ENCODE measurements at regions of chr9 and their contacts with region 1.

Region 1: GRCh38 chr9:14353222-14354056 is 39.5 kb upstream of the NFIB start:
- DNase-seq: peak; percentile 86 to 89
- ATAC-seq: peak; percentile 66 to 69
- H3K4me3 ChIP-seq: peak overlapping the region; percentile 15 to 40 (median 36)
- H3K27ac ChIP-seq: peak overlapping the region; percentile 84 to 90 (median 87)
- H3K4me1 ChIP-seq: peaks cover 19 to 24% of the 10 kb centered on the region in 2 donors
- H3K27me3 ChIP-seq: no peaks in the 10 kb centered on the region
- CTCF ChIP-seq: peak; percentile 87 to 95 (median 92)
- POLR2A ChIP-seq: no peak

Region 2: DNA sequence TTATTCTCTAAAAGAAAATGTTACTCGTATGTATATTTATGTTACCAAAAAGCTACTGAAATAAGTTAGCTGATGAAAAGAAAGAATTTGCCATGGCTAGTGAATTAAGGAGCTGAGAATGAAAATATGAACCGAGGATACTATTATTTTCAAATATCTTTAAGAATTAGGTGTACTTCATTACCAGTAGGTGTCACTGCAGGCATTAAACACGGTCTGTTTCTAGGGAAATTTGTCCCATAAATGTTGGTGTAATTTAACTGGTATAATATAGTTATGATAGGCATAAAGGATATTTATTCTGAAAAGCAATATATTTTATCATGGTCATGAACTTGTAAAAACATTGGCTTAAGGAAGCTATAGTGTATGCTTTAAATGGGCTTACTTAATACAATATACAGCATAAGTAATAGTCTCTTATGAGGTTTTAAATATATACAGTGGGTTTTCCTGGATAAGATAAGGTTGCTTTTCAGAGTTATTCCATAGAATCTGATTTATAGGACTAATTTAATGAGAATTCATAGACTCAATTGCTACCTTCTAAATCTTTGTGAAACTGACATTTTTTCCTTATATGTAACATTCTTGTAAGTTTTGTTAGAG is 1001.6 kb before region 1 on chr9:
- in situ Hi-C with region 1: loop called in 3 of 4 experiments (anchors 5 to 10 kb)
- intact Hi-C with region 1: loop called (anchors 1 kb)
- DNase-seq: no peak
- ATAC-seq: peak in 1 of 2 donors; percentile 41
- H3K4me3 ChIP-seq: no peak overlapping the region
- H3K27ac ChIP-seq: no peak overlapping the region
- H3K4me1 ChIP-seq: no peaks in the 10 kb centered on the region
- H3K27me3 ChIP-seq: no peaks in the 10 kb centered on the region
- CTCF ChIP-seq: peak; percentile 28 to 68 (median 52)
- POLR2A ChIP-seq: no peak

Region 3: GRCh38 chr9:13446938-13447842 is 906.2 kb before region 1 on chr9:
- in situ Hi-C with region 1: no loop called
- intact Hi-C with region 1: loop called (anchors 5 kb)
- DNase-seq: no peak
- ATAC-seq: no peak
- H3K4me3 ChIP-seq: peak overlapping the region in 3 of 4 donors; percentile 5 to 37 (median 19)
- H3K27ac ChIP-seq: peak overlapping the region; percentile 50 to 67 (median 62)
- H3K4me1 ChIP-seq: peaks cover 39 to 42% of the 10 kb centered on the region in 2 donors
- H3K27me3 ChIP-seq: no peaks in the 10 kb centered on the region
- CTCF ChIP-seq: peak in 2 of 5 experiments; percentile 23 to 46
- POLR2A ChIP-seq: no peak

Region 4: DNA sequence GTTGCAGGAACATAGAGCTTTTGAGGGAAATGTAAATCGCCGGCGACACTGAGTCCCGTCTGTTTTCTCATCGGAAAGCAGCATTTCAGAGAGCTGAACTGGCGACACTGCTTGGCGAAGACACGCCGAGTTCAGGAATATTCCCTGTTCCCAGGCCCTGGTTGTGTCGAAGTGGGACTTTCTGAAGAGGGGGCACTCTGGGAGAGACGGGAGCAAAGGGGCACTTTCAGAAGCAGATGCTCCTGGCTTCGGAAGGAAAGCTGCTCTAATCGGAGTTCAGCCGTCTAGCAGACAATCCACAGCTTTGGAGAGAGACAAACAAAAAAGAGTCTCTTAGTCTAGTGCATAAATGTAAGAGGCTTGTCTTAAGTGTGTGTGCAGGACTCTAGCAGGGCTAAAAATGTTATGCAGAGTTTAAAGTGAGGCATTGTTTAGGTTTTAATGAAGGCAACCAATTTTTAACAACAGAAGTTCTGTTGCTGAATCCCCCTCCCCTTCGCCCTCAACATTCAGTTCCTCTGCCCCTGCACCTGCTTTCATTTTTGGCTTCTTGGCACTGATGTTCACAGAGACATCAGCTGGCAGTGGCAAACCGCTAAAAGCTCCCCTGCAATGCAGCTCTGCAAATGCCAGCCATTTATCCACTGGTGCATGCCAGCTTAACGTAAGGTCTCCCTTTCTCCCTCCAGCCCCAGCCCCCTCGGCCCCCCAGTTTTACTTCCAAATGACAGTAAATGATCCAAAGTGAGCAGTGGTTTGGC is 784.4 kb before region 1 on chr9:
- in situ Hi-C with region 1: no loop called
- intact Hi-C with region 1: loop called (anchors 5 kb)
- DNase-seq: no peak
- ATAC-seq: peak; percentile 46 to 56
- H3K4me3 ChIP-seq: peak overlapping the region; percentile 38 to 53 (median 47)
- H3K27ac ChIP-seq: peak overlapping the region; percentile 63 to 79 (median 72)
- H3K4me1 ChIP-seq: peaks cover 27 to 29% of the 10 kb centered on the region in 2 donors
- H3K27me3 ChIP-seq: no peaks in the 10 kb centered on the region
- CTCF ChIP-seq: no peak
- POLR2A ChIP-seq: no peak

Region 5: GRCh38 chr9:14395317-14396082 is 42.1 kb after region 1 on chr9:
- in situ Hi-C with region 1: no loop called
- intact Hi-C with region 1: loop called (anchors 5 kb)
- DNase-seq: peak; percentile 32 to 51
- ATAC-seq: peak; percentile 52 to 71
- H3K4me3 ChIP-seq: peak overlapping the region; percentile 23 to 56 (median 38)
- H3K27ac ChIP-seq: peak overlapping the region; percentile 71 to 78 (median 76)
- H3K4me1 ChIP-seq: peaks cover 6 to 29% of the 10 kb centered on the region in 2 donors
- H3K27me3 ChIP-seq: no peaks in the 10 kb centered on the region
- CTCF ChIP-seq: no peak
- POLR2A ChIP-seq: no peak

Region 6: DNA sequence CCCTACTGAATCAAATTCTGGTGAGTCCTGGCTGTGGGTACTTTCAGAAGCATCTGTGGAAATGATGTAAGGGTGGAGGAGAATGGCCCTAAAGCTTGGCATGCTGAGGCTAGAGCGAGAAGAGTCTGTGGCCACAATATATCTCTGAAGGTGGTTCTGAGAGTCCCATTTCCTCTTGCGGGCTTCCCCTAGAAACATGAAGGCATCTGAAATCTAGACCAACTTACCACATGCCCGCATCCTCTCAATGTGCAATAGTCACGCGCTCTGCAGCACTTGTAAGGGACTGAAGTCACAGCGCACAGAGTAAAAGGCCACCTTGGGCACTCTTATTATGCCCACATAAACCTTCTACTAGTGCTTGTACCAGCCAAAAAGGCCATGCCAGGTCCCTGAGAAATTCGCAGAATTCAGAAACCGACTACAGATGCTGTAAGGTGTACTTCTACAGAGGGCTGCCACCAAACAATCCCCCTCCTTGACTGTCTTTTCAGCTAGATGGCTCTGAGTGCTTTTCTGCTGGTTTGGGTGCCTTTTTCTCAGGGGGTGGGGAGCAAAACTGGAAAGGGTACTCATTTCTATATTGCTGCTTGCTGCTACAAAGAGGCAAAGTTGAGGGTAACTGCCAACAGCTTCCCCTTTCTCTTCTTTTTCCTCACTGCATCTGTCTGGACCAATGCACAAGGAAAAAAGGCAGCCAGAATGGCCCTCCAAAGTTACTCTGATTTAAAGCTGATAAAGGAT is 232.5 kb after region 1 on chr9:
- in situ Hi-C with region 1: no loop called
- intact Hi-C with region 1: no loop called
- DNase-seq: no peak
- ATAC-seq: no peak
- H3K4me3 ChIP-seq: no peak overlapping the region
- H3K27ac ChIP-seq: no peak overlapping the region
- H3K4me1 ChIP-seq: no peaks in the 10 kb centered on the region
- H3K27me3 ChIP-seq: no peaks in the 10 kb centered on the region
- CTCF ChIP-seq: no peak
- POLR2A ChIP-seq: no peak

Measured in gastrocnemius medialis (tissue), 4 donors.